Naive thymus-derived CD4-positive, alpha-beta T cell (primary cell): ENCODE measurements at regions of chr3 and their contacts with region 1.

Region 1: GRCh38 chr3:140941434-140942220 is at the start of gene SLC25A36:
- DNase-seq: peak; percentile 83 to 96 (median 94)
- ATAC-seq: peak; percentile 99
- H3K4me3 ChIP-seq: peak within 1 kb of the TSS; percentile 69
- H3K4me3 Mint-ChIP-seq: peak within 1 kb of the TSS; percentile 90 to 100 (median 96)
- H3K27ac ChIP-seq: peak within 1 kb of the TSS; percentile 89
- H3K27ac Mint-ChIP-seq: peak within 1 kb of the TSS; percentile 94 to 100 (median 99)
- H3K4me1 ChIP-seq: peaks cover 9 to 14% of the 10 kb centered on the region in 2 donors
- H3K4me1 Mint-ChIP-seq: peaks cover 31 to 52% (median 47%) of the 10 kb centered on the region in 7 donors
- H3K27me3 ChIP-seq: no peaks in the 10 kb centered on the region
- H3K27me3 Mint-ChIP-seq: peaks cover 0 to 30% (median 0%) of the 10 kb centered on the region in 5 donors
- total RNA-seq, gene SLC25A36: 43.4 to 121 (median 66.9) TPM

Region 2: GRCh38 chr3:139389458-139390209 is 1552.0 kb before region 1 on chr3 and contains the start of gene COPB2:
- CTCF ChIA-PET with region 1: no interaction called
- POLR2A ChIA-PET with region 1: no interaction called
- intact Hi-C with region 1: loop called (anchors 1 kb)
- DNase-seq: peak; percentile 84 to 97 (median 87)
- ATAC-seq: peak; percentile 97
- H3K4me3 ChIP-seq: peak within 1 kb of the TSS; percentile 91
- H3K4me3 Mint-ChIP-seq: peak within 1 kb of the TSS; percentile 87 to 100 (median 99)
- H3K27ac ChIP-seq: peak within 1 kb of the TSS; percentile 93
- H3K27ac Mint-ChIP-seq: peak within 1 kb of the TSS; percentile 97 to 100 (median 99)
- H3K4me1 ChIP-seq: peaks cover 5 to 13% of the 10 kb centered on the region in 2 donors
- H3K4me1 Mint-ChIP-seq: peaks cover 34 to 70% (median 60%) of the 10 kb centered on the region in 7 donors
- H3K27me3 ChIP-seq: no peaks in the 10 kb centered on the region
- H3K27me3 Mint-ChIP-seq: peaks cover 0 to 13% (median 0%) of the 10 kb centered on the region in 5 donors
- total RNA-seq, gene COPB2: 23.5 to 109 (median 64.5) TPM

Region 3: DNA sequence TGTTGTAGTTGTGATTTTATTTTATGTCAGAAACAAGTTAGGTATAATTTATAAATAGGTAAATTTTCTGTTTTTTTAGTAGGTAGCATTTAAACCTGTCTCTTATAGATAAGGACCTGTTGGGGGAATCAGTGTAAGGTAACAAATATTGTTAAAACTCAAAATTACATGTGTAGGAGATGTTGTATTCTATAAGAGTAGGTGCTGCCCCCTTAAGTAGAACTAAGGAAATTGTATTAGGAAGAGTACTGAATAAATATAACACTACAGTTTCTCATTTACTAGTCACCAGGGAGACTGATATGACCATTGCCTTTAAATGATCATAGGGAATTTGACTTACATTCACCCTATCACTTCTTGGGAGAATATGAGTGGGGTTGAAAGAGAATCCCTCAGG is 31.2 kb after region 1 on chr3:
- CTCF ChIA-PET with region 1: no interaction called
- POLR2A ChIA-PET with region 1: interaction called, 4 read pairs
- intact Hi-C with region 1: loop called (anchors 1 to 2 kb)
- DNase-seq: peak in 4 of 9 donors; percentile 3 to 22 (median 8)
- ATAC-seq: peak; percentile 55
- H3K4me3 ChIP-seq: no peak overlapping the region
- H3K4me3 Mint-ChIP-seq: no peak overlapping the region
- H3K27ac ChIP-seq: no peak overlapping the region
- H3K27ac Mint-ChIP-seq: peak overlapping the region in 3 of 9 donors; percentile 13 to 39 (median 19)
- H3K4me1 ChIP-seq: no peaks in the 10 kb centered on the region
- H3K4me1 Mint-ChIP-seq: peaks cover 0 to 19% (median 10%) of the 10 kb centered on the region in 7 donors
- H3K27me3 ChIP-seq: no peaks in the 10 kb centered on the region
- H3K27me3 Mint-ChIP-seq: no peaks in the 10 kb centered on the region

Region 4: GRCh38 chr3:141266797-141267555 is 325.3 kb after region 1 on chr3:
- CTCF ChIA-PET with region 1: no interaction called
- POLR2A ChIA-PET with region 1: no interaction called
- intact Hi-C with region 1: loop called in 1 of 2 experiments (anchors 5 kb)
- DNase-seq: peak in 8 of 9 donors; percentile 20 to 82 (median 72)
- ATAC-seq: peak; percentile 85
- H3K4me3 ChIP-seq: peak overlapping the region; percentile 73
- H3K4me3 Mint-ChIP-seq: peak overlapping the region; percentile 84 to 92 (median 88)
- H3K27ac ChIP-seq: peak overlapping the region; percentile 77
- H3K27ac Mint-ChIP-seq: peak overlapping the region; percentile 91 to 99 (median 96)
- H3K4me1 ChIP-seq: peaks cover 0 to 35% of the 10 kb centered on the region in 2 donors
- H3K4me1 Mint-ChIP-seq: peaks cover 32 to 87% (median 39%) of the 10 kb centered on the region in 7 donors
- H3K27me3 ChIP-seq: no peaks in the 10 kb centered on the region
- H3K27me3 Mint-ChIP-seq: no peaks in the 10 kb centered on the region

Region 5: DNA sequence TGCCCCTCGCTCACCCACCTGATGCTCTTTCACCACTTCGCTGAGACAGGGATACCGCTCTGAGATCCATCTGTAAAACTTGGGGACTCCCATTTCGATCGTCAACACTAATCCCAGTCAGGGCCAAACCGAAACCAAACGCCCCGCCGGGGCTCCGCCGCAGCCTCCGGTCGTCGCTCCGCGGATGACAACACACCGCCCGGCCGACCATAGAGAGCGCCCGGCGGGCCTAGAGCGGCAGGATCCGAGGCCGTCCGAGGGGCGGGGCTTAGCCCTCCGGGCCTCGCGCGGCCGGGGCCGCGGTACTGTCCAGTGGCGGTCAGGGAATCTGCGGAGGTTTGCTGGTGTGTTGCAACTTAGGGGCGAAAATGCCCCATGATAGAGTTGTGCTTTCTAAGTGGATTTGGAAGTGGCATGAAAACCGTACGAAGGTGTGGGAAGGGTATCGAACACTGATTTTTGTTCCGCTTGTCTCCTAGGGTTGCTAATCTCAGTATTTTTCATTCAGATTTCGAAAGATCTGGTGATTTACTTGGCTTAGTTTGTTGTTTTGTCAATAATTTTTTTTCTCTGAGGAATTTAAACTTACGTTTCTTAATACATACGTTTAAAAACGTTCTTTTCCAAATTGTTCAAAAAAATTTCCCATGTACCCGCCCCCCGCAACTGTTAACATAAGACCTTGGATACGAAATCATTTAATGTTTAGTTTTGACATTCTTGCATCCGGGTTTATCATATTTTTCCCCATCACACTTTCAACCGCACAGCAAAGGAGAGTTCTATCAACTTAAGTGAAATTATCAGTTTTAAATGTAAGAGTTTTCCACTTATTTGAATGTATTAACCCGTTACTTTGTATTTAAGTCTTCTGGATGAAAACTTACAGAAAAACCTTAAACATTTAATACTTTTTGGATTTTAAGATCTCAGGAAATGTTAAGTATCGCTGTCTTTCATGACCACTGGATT is 1506.5 kb after region 1 on chr3 and contains the start of gene XRN1:
- CTCF ChIA-PET with region 1: no interaction called
- POLR2A ChIA-PET with region 1: no interaction called
- intact Hi-C with region 1: loop called in 1 of 2 experiments (anchors 1 kb)
- DNase-seq: peak; percentile 90 to 97 (median 94)
- ATAC-seq: peak; percentile 99
- H3K4me3 ChIP-seq: peak within 1 kb of the TSS; percentile 78
- H3K4me3 Mint-ChIP-seq: peak within 1 kb of the TSS; percentile 89 to 100 (median 98)
- H3K27ac ChIP-seq: peak within 1 kb of the TSS; percentile 99
- H3K27ac Mint-ChIP-seq: peak within 1 kb of the TSS; percentile 98 to 100 (median 99)
- H3K4me1 ChIP-seq: peaks cover 31% of the 10 kb centered on the region in 2 donors
- H3K4me1 Mint-ChIP-seq: peaks cover 26 to 55% (median 51%) of the 10 kb centered on the region in 7 donors
- H3K27me3 ChIP-seq: no peaks in the 10 kb centered on the region
- H3K27me3 Mint-ChIP-seq: no peaks in the 10 kb centered on the region
- total RNA-seq, gene XRN1: 86.1 to 123 (median 103) TPM